CD4-positive, alpha-beta memory T cell (primary cell): ENCODE measurements at regions of chr1 and their contacts with region 1.

Region 1: GRCh38 chr1:160768295-160768657 is 27.7 kb upstream of the LY9 start:
- DNase-seq: peak; percentile 83 to 87 (median 84)
- H3K4me3 ChIP-seq: peak overlapping the region; percentile 45 to 57
- H3K4me3 Mint-ChIP-seq: peak overlapping the region; percentile 83 to 93 (median 88)
- H3K27ac ChIP-seq: peak overlapping the region; percentile 68
- H3K27ac Mint-ChIP-seq: peak overlapping the region; percentile 93 to 99 (median 97)
- H3K4me1 ChIP-seq: peaks cover 18% of the 10 kb centered on the region
- H3K4me1 Mint-ChIP-seq: peaks cover 16 to 24% (median 19%) of the 10 kb centered on the region in 4 donors
- H3K27me3 ChIP-seq: no peaks in the 10 kb centered on the region
- H3K27me3 Mint-ChIP-seq: no peaks in the 10 kb centered on the region

Region 2: DNA sequence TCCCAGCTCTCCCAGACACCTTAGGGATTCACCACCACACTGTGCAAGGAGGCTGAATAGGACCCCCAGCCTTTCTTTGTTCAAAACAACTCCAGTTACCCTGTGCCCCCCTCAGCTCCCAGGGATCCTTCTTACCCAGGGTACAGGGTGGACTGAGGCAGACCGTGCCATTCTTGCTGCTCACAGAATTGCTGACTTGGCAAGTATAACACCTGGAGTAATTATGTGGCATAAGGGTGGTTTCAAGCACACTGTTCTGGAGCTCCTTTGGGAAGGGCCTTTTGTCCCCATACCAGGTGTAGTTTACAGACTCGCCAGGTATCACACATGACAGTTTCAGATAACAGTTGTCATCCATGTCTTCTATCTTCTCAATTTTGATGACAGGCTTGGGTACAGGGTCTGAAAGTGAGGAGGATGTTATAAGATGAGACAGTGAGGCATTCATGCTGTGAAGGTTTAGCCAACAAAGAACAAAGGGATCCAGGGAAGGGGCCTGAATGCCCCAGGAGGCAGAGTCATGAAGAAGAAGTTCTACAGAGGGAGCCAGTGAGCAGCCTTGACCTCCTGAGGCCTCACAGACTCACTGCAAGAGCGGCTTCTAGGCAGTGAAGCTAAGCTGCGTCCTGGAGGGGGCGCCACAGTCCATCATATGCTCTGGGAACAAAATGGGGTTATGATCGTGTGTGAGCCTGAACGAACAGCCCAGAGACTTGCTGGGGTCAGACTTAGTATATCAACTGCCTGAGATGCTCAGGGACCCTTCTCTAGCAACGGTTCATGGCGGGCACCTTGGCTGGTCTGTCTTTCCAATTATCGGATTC is 87.0 kb before region 1 on chr1:
- CTCF ChIA-PET with region 1: interaction called, 310 read pairs
- POLR2A ChIA-PET with region 1: interaction called, 39 read pairs
- intact Hi-C with region 1: loop called (anchors 1 kb)
- DNase-seq: peak; percentile 82 to 88 (median 85)
- H3K4me3 ChIP-seq: no peak overlapping the region
- H3K4me3 Mint-ChIP-seq: peak overlapping the region in 5 of 8 donors; percentile 15 to 58 (median 26)
- H3K27ac ChIP-seq: peak overlapping the region; percentile 55
- H3K27ac Mint-ChIP-seq: peak overlapping the region; percentile 67 to 97 (median 91)
- H3K4me1 ChIP-seq: peaks cover 55% of the 10 kb centered on the region
- H3K4me1 Mint-ChIP-seq: peaks cover 49 to 69% (median 53%) of the 10 kb centered on the region in 4 donors
- H3K27me3 ChIP-seq: no peaks in the 10 kb centered on the region
- H3K27me3 Mint-ChIP-seq: no peaks in the 10 kb centered on the region

Region 3: GRCh38 chr1:160726498-160727315 is 41.6 kb before region 1 on chr1:
- CTCF ChIA-PET with region 1: interaction called, 130 read pairs
- POLR2A ChIA-PET with region 1: interaction called, 12 read pairs
- intact Hi-C with region 1: loop called (anchors 1 kb)
- DNase-seq: peak; percentile 67 to 76 (median 74)
- H3K4me3 ChIP-seq: no peak overlapping the region
- H3K4me3 Mint-ChIP-seq: no peak overlapping the region
- H3K27ac ChIP-seq: no peak overlapping the region
- H3K27ac Mint-ChIP-seq: no peak overlapping the region
- H3K4me1 ChIP-seq: peaks cover 24% of the 10 kb centered on the region
- H3K4me1 Mint-ChIP-seq: peaks cover 11 to 20% (median 15%) of the 10 kb centered on the region in 4 donors
- H3K27me3 ChIP-seq: no peaks in the 10 kb centered on the region
- H3K27me3 Mint-ChIP-seq: no peaks in the 10 kb centered on the region

Region 4: GRCh38 chr1:160795951-160796383 is 27.7 kb after region 1 on chr1 and contains the start of gene LY9:
- CTCF ChIA-PET with region 1: interaction called, 40 read pairs
- POLR2A ChIA-PET with region 1: interaction called, 32 read pairs
- intact Hi-C with region 1: no loop called
- DNase-seq: peak; percentile 90 to 96 (median 95)
- H3K4me3 ChIP-seq: peak within 1 kb of the TSS; percentile 49 to 78
- H3K4me3 Mint-ChIP-seq: peak within 1 kb of the TSS; percentile 97 to 99 (median 98)
- H3K27ac ChIP-seq: peak within 1 kb of the TSS; percentile 82
- H3K27ac Mint-ChIP-seq: peak within 1 kb of the TSS; percentile 90 to 98 (median 97)
- H3K4me1 ChIP-seq: peaks cover 45% of the 10 kb centered on the region
- H3K4me1 Mint-ChIP-seq: peaks cover 37 to 69% (median 48%) of the 10 kb centered on the region in 4 donors
- H3K27me3 ChIP-seq: no peaks in the 10 kb centered on the region
- H3K27me3 Mint-ChIP-seq: no peaks in the 10 kb centered on the region
- total RNA-seq, gene LY9: 131 to 136 TPM

Region 5: DNA sequence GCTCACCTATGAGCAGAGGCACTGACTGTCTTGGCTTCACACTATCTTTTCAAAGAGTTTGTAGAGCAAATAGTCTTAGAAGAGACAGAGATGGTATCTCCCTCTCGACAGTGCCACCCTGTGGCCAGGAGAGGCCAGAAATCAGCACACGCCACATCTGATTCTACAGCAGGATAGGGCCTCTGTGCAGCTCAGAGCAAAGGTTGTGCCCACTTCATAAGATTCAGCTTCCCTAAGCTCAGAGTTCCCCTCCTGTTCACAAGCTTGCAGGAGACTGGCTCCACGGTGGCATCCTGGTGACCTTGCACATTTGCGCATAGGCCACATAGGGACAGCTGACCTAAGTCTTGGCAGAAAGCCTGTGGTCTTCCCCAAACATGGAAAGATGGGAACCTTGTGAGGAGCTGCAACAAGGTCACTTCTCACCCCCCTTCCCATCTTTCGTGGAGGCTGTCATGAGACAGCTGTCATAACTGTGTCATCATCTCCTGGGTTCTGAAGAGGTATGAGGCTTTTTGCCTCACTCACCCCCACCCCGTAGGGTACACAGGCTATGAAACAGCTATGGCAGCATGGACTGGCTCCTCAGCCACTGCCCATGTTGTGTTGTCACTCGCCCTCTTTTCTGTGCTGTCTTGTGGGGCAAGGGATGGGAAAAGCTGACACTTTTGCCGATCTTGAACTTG is 183.3 kb after region 1 on chr1:
- CTCF ChIA-PET with region 1: interaction called, 108 read pairs
- POLR2A ChIA-PET with region 1: interaction called, 3 read pairs
- intact Hi-C with region 1: loop called (anchors 2 kb)
- DNase-seq: peak; percentile 52 to 70 (median 65)
- H3K4me3 ChIP-seq: no peak overlapping the region
- H3K4me3 Mint-ChIP-seq: no peak overlapping the region
- H3K27ac ChIP-seq: no peak overlapping the region
- H3K27ac Mint-ChIP-seq: no peak overlapping the region
- H3K4me1 ChIP-seq: no peaks in the 10 kb centered on the region
- H3K4me1 Mint-ChIP-seq: peaks cover 6 to 13% (median 7%) of the 10 kb centered on the region in 4 donors
- H3K27me3 ChIP-seq: no peaks in the 10 kb centered on the region
- H3K27me3 Mint-ChIP-seq: no peaks in the 10 kb centered on the region

Region 6: DNA sequence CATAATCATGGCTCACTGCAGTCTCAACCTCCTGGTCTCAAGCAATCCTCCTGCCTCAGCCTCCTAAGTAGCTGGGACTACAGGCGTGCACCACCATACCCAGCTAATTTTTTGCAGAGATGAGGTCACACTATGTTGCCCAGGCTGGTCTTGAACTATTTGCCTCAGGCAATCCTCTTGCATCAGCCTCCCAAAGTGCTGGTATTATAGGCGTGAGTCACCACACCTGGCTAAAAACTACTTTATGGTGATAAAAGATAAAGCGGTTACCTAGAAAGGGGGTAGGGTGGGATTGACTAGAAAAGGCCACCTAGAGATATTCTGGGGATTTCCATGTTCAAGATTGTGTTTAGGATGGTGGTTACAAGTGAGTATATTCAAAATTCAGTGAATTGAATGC is 265.5 kb after region 1 on chr1:
- CTCF ChIA-PET with region 1: no interaction called
- POLR2A ChIA-PET with region 1: no interaction called
- intact Hi-C with region 1: no loop called
- DNase-seq: no peak
- H3K4me3 ChIP-seq: no peak overlapping the region
- H3K4me3 Mint-ChIP-seq: no peak overlapping the region
- H3K27ac ChIP-seq: no peak overlapping the region
- H3K27ac Mint-ChIP-seq: no peak overlapping the region
- H3K4me1 ChIP-seq: peaks cover 13% of the 10 kb centered on the region
- H3K4me1 Mint-ChIP-seq: peaks cover 10 to 30% (median 16%) of the 10 kb centered on the region in 4 donors
- H3K27me3 ChIP-seq: no peaks in the 10 kb centered on the region
- H3K27me3 Mint-ChIP-seq: no peaks in the 10 kb centered on the region